Heart left ventricle (tissue), 16 donors: ENCODE measurements at regions of chr3 and their contacts with region 1.

Region 1: GRCh38 chr3:933326-933725 is 159.5 kb upstream of the CNTN6 start:
- DNase-seq: no peak
- ATAC-seq: no peak
- H3K4me3 ChIP-seq: no peak overlapping the region
- H3K27ac ChIP-seq: no peak overlapping the region
- H3K4me1 ChIP-seq: no peaks in the 10 kb centered on the region
- H3K27me3 ChIP-seq: no peaks in the 10 kb centered on the region
- CTCF ChIP-seq: no peak
- POLR2A ChIP-seq: no peak

Region 2: DNA sequence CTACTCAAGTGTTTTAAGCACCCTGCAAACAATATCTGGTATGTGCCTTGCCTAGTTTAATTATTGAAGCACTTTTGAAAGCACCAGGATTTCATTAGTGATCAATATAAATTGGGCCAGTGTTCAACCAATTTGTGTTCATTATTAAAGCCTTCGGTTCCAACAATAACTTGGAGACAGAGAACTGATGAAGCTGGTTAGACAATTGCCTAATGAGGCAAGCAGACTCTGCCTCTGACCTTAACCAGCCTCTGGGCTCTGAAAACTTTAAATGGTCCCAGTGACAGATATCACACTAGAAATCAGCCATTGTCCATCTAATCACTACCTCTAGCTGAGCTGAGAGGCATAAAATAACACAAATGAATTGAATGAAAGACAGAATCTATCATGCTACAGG is 19.6 kb after region 1 on chr3:
- intact Hi-C with region 1: no loop called
- DNase-seq: no peak
- ATAC-seq: no peak
- H3K4me3 ChIP-seq: no peak overlapping the region
- H3K27ac ChIP-seq: no peak overlapping the region
- H3K4me1 ChIP-seq: no peaks in the 10 kb centered on the region
- H3K27me3 ChIP-seq: no peaks in the 10 kb centered on the region
- CTCF ChIP-seq: no peak
- POLR2A ChIP-seq: no peak

Region 3: DNA sequence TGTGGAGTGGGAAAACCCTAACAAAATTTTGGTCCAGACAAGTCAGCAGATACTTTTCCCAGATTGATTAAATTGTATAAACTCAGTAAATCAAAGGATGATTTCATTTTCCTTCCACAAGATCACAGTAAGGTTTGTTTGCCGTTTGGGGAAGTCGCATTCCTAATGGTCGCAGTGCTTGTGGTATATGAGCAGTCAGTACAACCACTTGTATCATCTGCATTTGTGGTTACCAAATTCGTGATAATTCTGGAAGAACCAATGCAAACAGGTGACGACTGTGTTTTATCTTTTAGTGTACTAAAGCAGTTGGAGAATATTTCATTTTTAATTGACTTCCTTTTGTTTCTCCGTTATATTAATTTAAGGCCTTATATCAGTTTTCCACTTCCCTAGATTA is 59.5 kb after region 1 on chr3:
- intact Hi-C with region 1: loop called in 1 of 10 experiments (anchors 2 kb)
- DNase-seq: no peak
- ATAC-seq: no peak
- H3K4me3 ChIP-seq: no peak overlapping the region
- H3K27ac ChIP-seq: no peak overlapping the region
- H3K4me1 ChIP-seq: no peaks in the 10 kb centered on the region
- H3K27me3 ChIP-seq: no peaks in the 10 kb centered on the region
- CTCF ChIP-seq: no peak
- POLR2A ChIP-seq: no peak